Gastrocnemius medialis (tissue), 4 donors: ENCODE measurements at regions of chr6 and their contacts with region 1.

Region 1: GRCh38 chr6:10722820-10723566 is at the start of gene TMEM14C:
- DNase-seq: peak; percentile 99
- ATAC-seq: peak; percentile 94 to 95
- H3K4me3 ChIP-seq: peak within 1 kb of the TSS; percentile 64 to 80 (median 74)
- H3K27ac ChIP-seq: peak within 1 kb of the TSS; percentile 87 to 96 (median 90)
- H3K4me1 ChIP-seq: peaks cover 26% of the 10 kb centered on the region in 2 donors
- H3K27me3 ChIP-seq: no peaks in the 10 kb centered on the region
- CTCF ChIP-seq: no peak
- POLR2A ChIP-seq: peak; percentile 72 to 79
- total RNA-seq, gene TMEM14C: 93.2 to 130 (median 117) TPM

Region 2: DNA sequence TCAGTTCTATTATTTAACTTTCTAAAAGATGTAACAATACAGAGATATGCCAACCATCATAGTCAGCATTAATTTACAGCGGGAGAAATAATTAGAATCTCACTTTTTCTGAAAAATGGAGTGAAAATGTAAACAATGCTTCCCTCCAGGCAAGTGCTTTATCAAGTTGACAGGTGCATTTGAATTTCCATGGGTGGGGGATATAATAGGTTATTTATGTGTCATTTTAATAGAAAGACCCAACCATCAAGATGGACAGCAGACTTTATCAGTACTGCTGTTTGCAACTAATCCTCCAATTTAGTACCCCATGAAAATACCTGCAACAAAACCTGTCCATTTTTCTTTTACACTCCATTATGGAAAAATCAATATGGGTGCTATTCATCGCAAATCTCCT is 1088.2 kb before region 1 on chr6:
- in situ Hi-C with region 1: no loop called
- intact Hi-C with region 1: no loop called
- DNase-seq: no peak
- ATAC-seq: no peak
- H3K4me3 ChIP-seq: no peak overlapping the region
- H3K27ac ChIP-seq: no peak overlapping the region
- H3K4me1 ChIP-seq: no peaks in the 10 kb centered on the region
- H3K27me3 ChIP-seq: no peaks in the 10 kb centered on the region
- CTCF ChIP-seq: no peak
- POLR2A ChIP-seq: no peak

Region 3: DNA sequence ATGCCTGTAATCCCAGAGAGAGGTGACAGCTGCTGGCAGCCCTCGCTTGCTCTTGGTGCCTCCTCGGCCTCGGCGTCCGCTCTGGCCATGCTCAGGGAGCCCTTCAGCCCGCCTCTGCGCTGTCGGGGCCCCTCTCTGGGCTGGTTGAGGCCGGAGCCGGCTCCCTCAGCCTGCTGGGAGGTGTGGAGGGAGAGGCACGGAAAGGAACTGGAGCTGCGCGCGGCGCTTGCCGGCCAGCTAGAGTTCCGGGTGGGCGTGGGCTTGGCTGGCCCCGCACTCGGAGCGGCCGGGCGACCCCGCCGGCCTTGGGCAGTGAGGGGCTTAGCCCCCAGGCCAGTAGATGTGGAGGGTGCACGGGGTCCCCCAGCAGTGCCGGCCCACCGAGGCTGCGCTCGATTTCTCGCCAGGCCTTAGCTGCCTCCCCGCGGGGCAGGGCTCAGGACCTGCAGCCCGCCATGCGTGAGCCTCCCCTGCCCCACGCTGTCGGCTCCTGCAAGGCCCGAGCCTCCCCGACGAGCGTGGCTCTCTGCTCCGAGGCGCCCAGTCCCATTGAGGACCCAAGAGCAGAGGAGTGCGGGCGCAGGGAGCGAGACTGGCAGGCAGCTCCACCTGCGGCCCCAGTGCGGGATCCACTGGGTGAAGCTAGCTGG is 63.2 kb before region 1 on chr6:
- in situ Hi-C with region 1: no loop called
- intact Hi-C with region 1: no loop called
- DNase-seq: no peak
- ATAC-seq: no peak
- H3K4me3 ChIP-seq: peak overlapping the region in 2 of 4 donors; percentile 21 to 37
- H3K27ac ChIP-seq: no peak overlapping the region
- H3K4me1 ChIP-seq: peaks cover 0 to 5% of the 10 kb centered on the region in 2 donors
- H3K27me3 ChIP-seq: no peaks in the 10 kb centered on the region
- CTCF ChIP-seq: no peak
- POLR2A ChIP-seq: no peak

Region 4: DNA sequence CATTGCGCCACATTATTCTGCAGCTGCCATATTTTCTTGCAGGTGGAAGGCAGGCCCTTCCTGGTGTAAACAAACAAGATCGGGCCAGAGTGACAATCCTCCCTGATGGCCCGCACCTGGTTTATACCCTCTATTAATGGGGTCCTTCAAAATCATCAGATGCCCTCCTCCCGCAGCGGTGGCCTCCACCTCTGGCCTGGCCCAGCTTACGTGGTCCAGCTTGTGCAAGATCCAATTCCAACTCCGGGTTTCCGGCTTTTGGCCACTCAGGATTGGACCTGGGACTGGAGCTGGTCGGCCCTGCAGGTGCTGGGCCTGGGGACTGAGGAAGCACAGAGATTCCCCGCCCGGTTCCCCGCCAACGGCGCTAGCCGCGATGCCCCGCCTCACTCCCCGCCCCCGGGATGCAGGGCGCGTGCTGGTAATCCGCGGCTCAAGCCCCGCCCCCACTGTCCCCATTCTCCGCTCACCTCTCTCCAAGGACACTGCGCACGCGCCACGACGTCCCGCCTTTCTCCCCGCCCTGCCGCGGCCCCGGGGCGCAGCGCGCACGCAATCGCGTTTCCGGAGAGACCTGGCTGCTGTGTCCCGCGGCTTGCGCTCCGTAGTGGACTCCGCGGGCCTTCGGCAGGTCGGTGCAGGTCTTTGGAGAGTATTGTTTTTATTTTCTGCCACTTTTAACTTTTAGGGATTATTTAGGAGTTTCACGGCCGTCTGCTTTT is 24.4 kb after region 1 on chr6 and contains the start of gene TMEM14B:
- in situ Hi-C with region 1: no loop called
- intact Hi-C with region 1: loop called (anchors 1 kb)
- DNase-seq: peak; percentile 99
- ATAC-seq: peak; percentile 97
- H3K4me3 ChIP-seq: peak within 1 kb of the TSS; percentile 69 to 91 (median 74)
- H3K27ac ChIP-seq: peak within 1 kb of the TSS; percentile 78 to 95 (median 86)
- H3K4me1 ChIP-seq: peaks cover 22 to 26% of the 10 kb centered on the region in 2 donors
- H3K27me3 ChIP-seq: no peaks in the 10 kb centered on the region
- CTCF ChIP-seq: no peak
- POLR2A ChIP-seq: peak; percentile 68 to 72
- total RNA-seq, gene TMEM14B: 68.3 to 93.8 (median 79.4) TPM